Panc1 (cell line): ENCODE measurements at regions of chr2 and their contacts with region 1.

Region 1: DNA sequence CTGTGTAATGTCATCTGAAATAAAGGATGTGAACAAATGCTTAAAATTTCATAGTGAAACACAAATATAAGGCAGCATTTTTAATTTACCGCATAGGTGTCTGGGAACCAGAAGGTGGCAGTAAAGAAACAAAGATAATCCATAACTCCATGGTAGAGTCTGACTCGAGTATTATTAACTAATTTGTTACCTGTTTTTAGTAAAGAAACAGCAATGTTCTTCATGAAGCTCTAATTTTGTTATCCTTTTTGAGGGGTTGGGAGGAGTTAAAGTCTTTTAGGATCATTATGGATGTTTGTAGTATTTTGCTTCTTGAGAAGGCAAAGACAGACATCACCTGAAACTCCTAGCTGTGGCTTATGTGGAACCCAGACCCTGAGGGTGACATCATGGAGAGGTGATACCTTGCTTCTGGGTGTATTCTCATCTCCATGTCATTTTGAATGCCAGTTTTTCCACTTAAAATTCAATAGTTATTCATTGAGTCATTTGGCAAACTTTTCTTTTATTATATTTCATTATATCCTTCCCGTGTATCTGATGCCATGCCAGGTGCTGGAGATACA is 286.2 kb upstream of the EPAS1 start:
- DNase-seq: no peak
- ATAC-seq: peak; percentile 85
- H3K4me3 ChIP-seq: no peak overlapping the region
- H3K27ac ChIP-seq: no peak overlapping the region
- H3K4me1 ChIP-seq: no peaks in the 10 kb centered on the region
- H3K27me3 ChIP-seq: no peaks in the 10 kb centered on the region
- CTCF ChIP-seq: peak; percentile 71; the same call in 1 of the 2 replicates

Region 2: GRCh38 chr2:46409753-46410152 is 398.7 kb after region 1 on chr2:
- CTCF ChIA-PET with region 1: no interaction called
- POLR2A ChIA-PET with region 1: interaction called, 15 read pairs
- in situ Hi-C with region 1: no loop called
- intact Hi-C with region 1: no loop called
- DNase-seq: no peak
- ATAC-seq: no peak
- H3K4me3 ChIP-seq: no peak overlapping the region
- H3K27ac ChIP-seq: no peak overlapping the region
- H3K4me1 ChIP-seq: peaks cover 11% of the 10 kb centered on the region
- H3K27me3 ChIP-seq: no peaks in the 10 kb centered on the region
- CTCF ChIP-seq: no peak